ENCODE measurements at regions of chr2 and their contacts with region 1.

Region 1: GRCh38 chr2:66239655-66240054 is 195.3 kb upstream of the MEIS1 start:
- DNase-seq: no peak
- H3K4me3 ChIP-seq: no peak overlapping the region
- H3K27ac ChIP-seq: no peak overlapping the region
- H3K4me1 ChIP-seq: no peaks in the 10 kb centered on the region
- H3K27me3 ChIP-seq: no peaks in the 10 kb centered on the region
- CTCF ChIP-seq: no peak
- POLR2A ChIP-seq: no peak

Region 2: GRCh38 chr2:66228128-66228547 is 11.5 kb before region 1 on chr2:
- CTCF ChIA-PET with region 1: no interaction called
- POLR2A ChIA-PET with region 1: no interaction called
- dilution Hi-C with region 1: no loop called
- intact Hi-C with region 1: no loop called
- DNase-seq: no peak
- H3K4me3 ChIP-seq: no peak overlapping the region
- H3K27ac ChIP-seq: no peak overlapping the region
- H3K4me1 ChIP-seq: no peaks in the 10 kb centered on the region
- H3K27me3 ChIP-seq: no peaks in the 10 kb centered on the region
- CTCF ChIP-seq: no peak
- POLR2A ChIP-seq: no peak

Region 3: GRCh38 chr2:66536997-66537396 is 297.3 kb after region 1 on chr2:
- CTCF ChIA-PET with region 1: no interaction called
- POLR2A ChIA-PET with region 1: no interaction called
- dilution Hi-C with region 1: no loop called
- intact Hi-C with region 1: no loop called
- DNase-seq: no peak
- H3K4me3 ChIP-seq: no peak overlapping the region
- H3K27ac ChIP-seq: no peak overlapping the region
- H3K4me1 ChIP-seq: no peaks in the 10 kb centered on the region
- H3K27me3 ChIP-seq: no peaks in the 10 kb centered on the region
- CTCF ChIP-seq: no peak
- POLR2A ChIP-seq: no peak

Region 4: DNA sequence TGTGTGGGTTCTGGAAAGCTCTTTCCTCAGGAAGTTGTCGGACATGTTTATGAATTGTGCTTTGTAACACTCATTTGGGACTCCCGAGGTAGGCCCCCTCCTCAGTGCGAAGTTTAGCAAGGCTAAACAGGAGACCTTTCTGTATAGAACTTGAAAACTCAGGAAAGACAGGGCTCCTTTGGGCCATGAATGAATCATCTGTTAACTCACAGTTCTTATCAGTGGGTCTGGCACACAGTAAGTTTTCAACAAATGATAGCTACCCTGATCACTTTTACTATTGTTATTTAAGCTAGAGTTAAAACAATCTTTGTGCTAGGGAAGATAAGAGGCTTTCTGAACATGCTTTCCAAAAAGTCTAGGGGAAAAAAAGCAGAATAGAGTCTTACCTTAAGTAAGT is 727.0 kb after region 1 on chr2:
- CTCF ChIA-PET with region 1: no interaction called
- POLR2A ChIA-PET with region 1: no interaction called
- dilution Hi-C with region 1: no loop called
- intact Hi-C with region 1: loop called (anchors 5 kb)
- DNase-seq: no peak
- H3K4me3 ChIP-seq: no peak overlapping the region
- H3K27ac ChIP-seq: no peak overlapping the region
- H3K4me1 ChIP-seq: no peaks in the 10 kb centered on the region
- H3K27me3 ChIP-seq: no peaks in the 10 kb centered on the region
- CTCF ChIP-seq: no peak
- POLR2A ChIP-seq: no peak